ENCODE measurements at regions of chrX and their contacts with region 1.

Region 1: GRCh38 chrX:120125444-120125843 is 9.7 kb upstream of the RHOXF1 start:
- DNase-seq: no peak
- H3K4me3 ChIP-seq: peak overlapping the region in 1 of 4 donors; percentile 3
- H3K27ac ChIP-seq: no peak overlapping the region
- H3K4me1 ChIP-seq: peaks cover 0 to 8% (median 0%) of the 10 kb centered on the region in 4 donors
- H3K27me3 ChIP-seq: no peaks in the 10 kb centered on the region
- CTCF ChIP-seq: no peak
- EP300 ChIP-seq: no peak
- POLR2A ChIP-seq: no peak

Region 2: DNA sequence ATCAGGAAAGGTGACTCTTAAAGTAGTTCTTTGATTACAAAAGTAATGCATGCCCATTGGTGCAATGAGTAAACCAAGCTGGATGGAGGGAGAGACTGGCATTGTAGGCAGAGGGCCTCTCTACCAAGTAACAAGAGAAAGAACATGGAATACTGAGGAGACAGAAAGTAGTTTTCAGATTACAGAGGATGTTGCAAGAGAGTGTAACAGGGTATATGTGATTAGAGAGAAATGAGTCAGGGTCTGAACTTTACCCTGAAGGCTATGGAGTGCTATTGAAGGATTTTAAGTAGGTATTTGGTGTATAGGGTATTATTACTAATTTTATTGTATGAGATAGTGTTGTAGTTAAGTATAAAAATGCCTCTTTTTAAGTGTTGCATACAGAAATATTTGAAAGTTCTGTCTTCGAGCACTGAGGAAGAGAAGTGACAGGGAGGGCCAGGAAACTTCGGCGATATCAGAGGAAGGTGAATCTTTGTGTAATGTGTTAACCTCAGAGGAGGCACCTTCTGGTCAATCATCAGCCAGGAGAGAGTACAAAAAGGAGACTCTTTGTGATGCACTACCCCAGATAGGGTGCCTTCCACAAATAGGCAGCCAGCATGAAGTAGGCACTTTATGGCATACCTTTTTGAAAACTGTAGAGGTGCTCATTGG is 190.1 kb before region 1 on chrX:
- intact Hi-C with region 1: no loop called
- DNase-seq: no peak
- H3K4me3 ChIP-seq: no peak overlapping the region
- H3K27ac ChIP-seq: no peak overlapping the region
- H3K4me1 ChIP-seq: no peaks in the 10 kb centered on the region
- H3K27me3 ChIP-seq: no peaks in the 10 kb centered on the region
- CTCF ChIP-seq: no peak
- EP300 ChIP-seq: no peak
- POLR2A ChIP-seq: no peak

Region 3: GRCh38 chrX:120036704-120037103 is 88.7 kb before region 1 on chrX:
- intact Hi-C with region 1: no loop called
- DNase-seq: no peak
- H3K4me3 ChIP-seq: no peak overlapping the region
- H3K27ac ChIP-seq: no peak overlapping the region
- H3K4me1 ChIP-seq: no peaks in the 10 kb centered on the region
- H3K27me3 ChIP-seq: no peaks in the 10 kb centered on the region
- CTCF ChIP-seq: no peak
- EP300 ChIP-seq: no peak
- POLR2A ChIP-seq: no peak

Region 4: GRCh38 chrX:120213436-120214265 is 88.2 kb after region 1 on chrX:
- intact Hi-C with region 1: loop called (anchors 10 kb)
- DNase-seq: no peak
- H3K4me3 ChIP-seq: no peak overlapping the region
- H3K27ac ChIP-seq: no peak overlapping the region
- H3K4me1 ChIP-seq: no peaks in the 10 kb centered on the region
- H3K27me3 ChIP-seq: no peaks in the 10 kb centered on the region
- CTCF ChIP-seq: peak; percentile 61 to 71 (median 62)
- EP300 ChIP-seq: no peak
- POLR2A ChIP-seq: no peak

Region 5: DNA sequence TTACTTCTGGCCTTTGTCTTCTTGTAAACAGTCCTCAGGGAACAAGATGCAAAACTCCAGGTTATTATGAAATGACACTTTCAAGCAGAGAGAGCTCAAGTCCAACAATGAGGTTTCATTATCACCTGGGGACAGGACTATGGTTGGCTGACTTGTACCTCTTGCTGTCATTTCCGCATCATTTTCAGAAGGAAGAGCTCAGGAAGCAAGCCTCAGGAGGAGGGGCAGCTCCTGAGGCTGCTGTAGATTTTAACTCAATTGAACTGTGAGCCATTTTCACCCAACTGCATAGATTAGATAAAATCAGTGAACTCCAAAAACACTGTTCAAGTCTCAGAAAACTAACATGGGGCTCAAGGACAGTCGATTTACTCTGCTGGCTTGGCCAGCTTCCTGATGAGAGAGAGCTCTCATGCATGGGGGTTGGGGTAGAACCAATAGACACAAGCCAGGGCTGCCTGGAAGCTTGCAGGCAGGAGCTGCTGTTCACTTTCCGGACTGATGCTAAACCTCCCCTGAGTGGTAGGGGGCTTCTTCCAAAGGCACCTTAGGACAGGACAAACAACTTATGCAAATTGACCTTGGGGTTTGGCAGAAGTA is 162.2 kb after region 1 on chrX:
- intact Hi-C with region 1: no loop called
- DNase-seq: no peak
- H3K4me3 ChIP-seq: no peak overlapping the region
- H3K27ac ChIP-seq: no peak overlapping the region
- H3K4me1 ChIP-seq: no peaks in the 10 kb centered on the region
- H3K27me3 ChIP-seq: no peaks in the 10 kb centered on the region
- CTCF ChIP-seq: no peak
- EP300 ChIP-seq: no peak
- POLR2A ChIP-seq: no peak

Measured in esophagus muscularis mucosa (tissue), 4 donors.